Activated CD4-positive, alpha-beta T cell treated with anti-CD3 and anti-CD28 coated beads, Interleukin-2, amount 10 ng/mL, durations not matched to agents 24 days and 14 days (primary cell): ENCODE measurements at regions of chr14 and their contacts with region 1.

Region 1: DNA sequence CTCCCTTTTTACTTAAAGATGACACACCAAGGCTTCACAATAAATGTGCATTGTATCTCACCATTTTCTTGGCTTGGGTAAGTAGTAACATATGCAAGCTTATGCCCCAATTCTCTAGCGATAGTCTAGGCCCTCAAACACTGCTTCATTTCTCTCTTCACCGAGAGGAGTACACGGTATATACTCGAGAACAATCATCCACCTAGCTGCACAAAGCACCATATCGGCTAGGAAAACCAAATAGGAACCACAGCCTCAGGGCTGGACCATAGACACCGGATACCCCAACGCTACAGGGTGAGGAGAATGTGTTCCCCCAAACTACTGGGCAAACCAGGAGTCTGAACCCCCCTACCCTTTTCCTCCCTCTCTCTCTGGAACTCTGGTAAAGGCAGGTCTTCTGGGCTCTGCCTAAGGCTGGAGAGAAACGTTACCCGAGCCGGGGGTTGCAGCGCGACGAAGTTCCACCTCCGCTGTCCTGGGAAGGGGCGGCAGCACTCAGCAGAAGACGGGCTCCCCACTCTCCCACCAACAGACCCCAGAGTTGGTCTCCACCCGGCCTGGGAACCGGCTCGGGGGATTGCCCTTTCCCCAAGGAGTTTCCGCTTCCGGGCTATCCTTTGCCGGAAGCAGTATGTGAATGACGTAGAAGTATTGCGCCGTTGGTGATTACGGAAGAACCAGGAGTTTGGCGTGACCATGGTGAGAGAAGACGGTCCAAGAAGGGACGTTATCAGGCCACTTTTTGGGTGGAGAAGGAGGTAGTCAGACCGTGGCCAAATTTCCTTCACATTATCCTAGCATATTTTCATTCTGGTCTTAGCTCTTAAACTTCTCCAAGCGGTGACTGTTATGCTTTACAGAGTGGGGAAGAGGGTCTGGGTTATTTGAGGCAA is at the starts of genes AREL1 and FCF1:
- DNase-seq: peak; percentile 96
- H3K4me3 Mint-ChIP-seq: peak within 1 kb of the TSS; percentile 92
- H3K27ac Mint-ChIP-seq: peak within 1 kb of the TSS; percentile 89
- H3K4me1 Mint-ChIP-seq: peaks cover 36% of the 10 kb centered on the region
- H3K27me3 Mint-ChIP-seq: no peaks in the 10 kb centered on the region
- total RNA-seq, gene AREL1: 43.5 and 45.5 TPM in 2 replicates
- total RNA-seq, gene FCF1: 64.5 and 68.6 TPM in 2 replicates

Region 2: DNA sequence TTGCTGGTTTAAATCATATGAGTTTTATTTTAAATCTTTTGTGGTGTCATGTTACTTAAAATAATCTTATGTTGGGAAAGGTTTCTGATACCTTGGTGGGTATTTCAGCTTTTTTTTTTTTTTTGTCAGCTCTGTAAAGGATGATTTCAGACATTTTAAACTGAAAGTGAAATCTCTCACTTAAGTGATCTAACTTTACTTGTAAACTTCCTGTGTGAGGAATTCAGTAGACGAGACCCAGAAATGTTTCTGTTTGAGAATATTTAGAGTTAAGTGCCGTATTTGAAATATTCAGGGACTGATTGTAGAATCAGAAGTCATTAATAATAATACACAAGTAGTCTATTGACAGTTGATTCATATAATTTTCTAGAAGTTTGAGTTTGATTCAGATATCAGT is 125.4 kb after region 1 on chr14:
- intact Hi-C with region 1: loop called (anchors 5 kb)
- DNase-seq: no peak
- H3K4me3 Mint-ChIP-seq: peak overlapping the region; percentile 74
- H3K27ac Mint-ChIP-seq: peak overlapping the region; percentile 89
- H3K4me1 Mint-ChIP-seq: peaks cover 61% of the 10 kb centered on the region
- H3K27me3 Mint-ChIP-seq: no peaks in the 10 kb centered on the region

Region 3: GRCh38 chr14:74881431-74882361 is 168.9 kb after region 1 on chr14 and contains the start of gene DLST:
- intact Hi-C with region 1: loop called (anchors 5 kb)
- DNase-seq: peak; percentile 97
- H3K4me3 Mint-ChIP-seq: peak within 1 kb of the TSS; percentile 99
- H3K27ac Mint-ChIP-seq: peak within 1 kb of the TSS; percentile 93
- H3K4me1 Mint-ChIP-seq: peaks cover 44% of the 10 kb centered on the region
- H3K27me3 Mint-ChIP-seq: no peaks in the 10 kb centered on the region
- total RNA-seq, gene DLST: 110 and 111 TPM in 2 replicates

Region 4: DNA sequence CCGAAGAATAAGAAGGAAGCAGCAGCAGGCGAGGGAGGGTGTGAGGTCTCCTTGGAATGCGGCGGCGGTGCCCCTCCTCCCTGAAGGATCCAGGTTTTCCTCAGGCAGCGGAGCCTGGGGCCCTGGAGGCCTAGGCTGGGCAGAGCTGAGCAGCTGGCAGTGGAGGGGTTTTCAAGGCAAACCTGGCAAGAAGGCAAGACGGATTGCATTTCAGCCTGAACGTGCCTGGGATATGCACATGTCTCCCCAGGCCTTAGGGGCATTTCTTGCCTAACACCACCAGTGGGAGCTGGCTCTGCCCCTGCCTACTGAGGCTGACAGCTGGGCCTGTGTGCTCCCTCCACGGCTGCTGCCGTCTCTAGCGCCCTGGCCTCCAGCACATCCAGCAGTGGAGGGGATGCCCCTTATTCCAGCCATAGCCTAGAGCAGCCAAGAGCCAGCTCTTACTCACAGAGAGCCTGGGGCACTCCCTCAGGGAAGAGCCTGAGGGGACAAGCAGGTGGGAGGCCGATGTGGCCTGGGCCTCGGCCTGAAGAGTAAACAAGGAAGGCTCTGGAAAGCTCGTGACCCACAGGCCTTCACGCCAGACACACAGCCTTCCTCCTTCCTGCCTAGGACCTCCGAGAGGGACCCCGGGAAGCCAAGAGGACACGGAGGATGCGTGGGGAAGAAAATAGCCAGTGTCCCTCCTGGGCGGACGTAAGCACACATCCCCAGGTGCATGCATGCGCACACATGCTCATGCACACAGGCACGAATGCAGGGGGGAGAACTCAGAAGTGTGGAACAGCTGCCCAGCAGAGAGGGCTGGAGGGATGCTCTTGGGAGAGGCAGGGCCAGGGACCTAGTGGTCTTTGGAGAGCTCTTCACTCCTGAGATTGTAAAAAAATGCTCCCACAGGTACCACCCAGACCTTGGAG is 267.0 kb after region 1 on chr14:
- intact Hi-C with region 1: no loop called
- DNase-seq: no peak
- H3K4me3 Mint-ChIP-seq: no peak overlapping the region
- H3K27ac Mint-ChIP-seq: no peak overlapping the region
- H3K4me1 Mint-ChIP-seq: peaks cover 4% of the 10 kb centered on the region
- H3K27me3 Mint-ChIP-seq: peaks cover 2% of the 10 kb centered on the region